Panc1 (cell line): ENCODE measurements at regions of chr12 and their contacts with region 1.

Region 1: GRCh38 chr12:32069071-32069470 is 37.6 kb upstream of the BICD1 start:
- DNase-seq: no peak
- ATAC-seq: no peak
- H3K4me3 ChIP-seq: no peak overlapping the region
- H3K27ac ChIP-seq: no peak overlapping the region
- H3K4me1 ChIP-seq: no peaks in the 10 kb centered on the region
- H3K27me3 ChIP-seq: no peaks in the 10 kb centered on the region
- CTCF ChIP-seq: no peak

Region 2: DNA sequence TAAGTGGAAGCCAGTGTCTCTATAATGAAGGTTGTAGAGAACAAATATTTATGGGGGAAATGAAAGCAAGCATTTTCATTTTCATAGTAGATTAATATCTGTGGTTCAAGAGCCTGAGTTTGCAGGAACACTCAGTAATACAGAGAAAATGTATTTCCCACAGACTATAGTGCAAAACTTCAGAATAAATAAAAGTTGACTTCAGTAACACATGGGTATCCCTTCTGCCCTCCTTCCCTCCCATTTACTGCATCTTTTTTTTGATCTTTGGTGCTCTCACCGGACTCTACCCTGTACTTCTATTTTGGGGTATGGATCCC is 264.9 kb before region 1 on chr12:
- CTCF ChIA-PET with region 1: interaction called, 13 read pairs
- POLR2A ChIA-PET with region 1: no interaction called
- in situ Hi-C with region 1: no loop called
- intact Hi-C with region 1: no loop called
- DNase-seq: no peak
- ATAC-seq: no peak
- H3K4me3 ChIP-seq: no peak overlapping the region
- H3K27ac ChIP-seq: no peak overlapping the region
- H3K4me1 ChIP-seq: no peaks in the 10 kb centered on the region
- H3K27me3 ChIP-seq: no peaks in the 10 kb centered on the region
- CTCF ChIP-seq: no peak